B cell (primary cell): ENCODE measurements at regions of chr4 and their contacts with region 1.

Region 1: GRCh38 chr4:2241410-2242353 is at the starts of genes HAUS3 and POLN:
- DNase-seq: peak; percentile 100
- ATAC-seq: peak; percentile 97
- H3K4me3 ChIP-seq: peak within 1 kb of the TSS; percentile 66 to 88 (median 76)
- H3K4me3 Mint-ChIP-seq: peak within 1 kb of the TSS; percentile 95
- H3K27ac ChIP-seq: peak within 1 kb of the TSS; percentile 53 to 89
- H3K27ac Mint-ChIP-seq: peak within 1 kb of the TSS; percentile 95
- H3K4me1 ChIP-seq: peaks cover 34 to 45% of the 10 kb centered on the region in 2 donors
- H3K4me1 Mint-ChIP-seq: peaks cover 59% of the 10 kb centered on the region
- H3K27me3 ChIP-seq: no peaks in the 10 kb centered on the region
- H3K27me3 Mint-ChIP-seq: no peaks in the 10 kb centered on the region
- CTCF ChIP-seq: peak; percentile 23
- total RNA-seq, gene HAUS3: 24.2 and 26.5 TPM in 2 replicates
- total RNA-seq, gene POLN: 1.5 and 4.2 TPM in 2 replicates

Region 2: DNA sequence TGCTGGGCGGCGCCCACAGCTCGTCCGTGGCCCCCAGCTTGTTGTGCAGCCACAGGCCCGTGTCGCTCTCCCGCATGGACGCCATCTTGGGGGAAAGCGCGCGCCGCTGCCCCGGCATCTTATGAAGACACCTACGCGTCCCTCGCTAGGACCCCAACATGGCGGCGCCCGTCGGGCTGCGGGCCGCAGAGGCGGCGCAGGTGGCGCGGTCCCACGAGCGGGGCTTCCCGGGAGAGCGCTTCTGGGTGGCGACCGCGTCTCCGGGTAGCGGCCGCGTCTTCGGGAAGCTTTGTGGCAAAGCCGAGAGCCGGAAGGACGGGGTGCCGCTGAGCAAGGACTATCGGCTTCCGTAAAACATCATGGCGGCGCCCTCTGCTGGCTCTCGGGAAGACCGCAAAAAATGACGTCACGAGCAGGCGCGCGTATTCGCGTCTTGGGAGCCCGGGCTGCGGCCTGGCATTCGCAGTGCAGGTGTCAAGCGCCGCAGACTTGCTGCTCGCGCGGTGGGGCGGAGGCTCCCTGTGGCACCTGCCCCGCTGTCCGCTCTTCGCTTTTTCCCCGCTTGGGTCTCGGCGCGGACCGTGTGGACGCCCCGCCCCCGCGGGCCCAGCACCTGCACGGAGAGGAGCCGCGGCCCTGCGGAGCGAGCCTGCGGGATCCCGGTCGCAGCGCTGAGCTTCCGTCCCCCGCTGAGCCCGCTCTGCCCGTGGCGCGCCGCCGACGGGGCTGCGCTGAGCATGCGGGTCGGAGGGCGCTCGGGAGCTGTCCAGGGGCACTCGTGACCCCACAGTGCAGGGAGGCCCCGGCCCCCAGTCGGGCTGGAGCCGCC is 232.6 kb before region 1 on chr4 and contains the start of gene NELFA:
- CTCF ChIA-PET with region 1: no interaction called
- POLR2A ChIA-PET with region 1: no interaction called
- intact Hi-C with region 1: loop called (anchors 10 kb)
- DNase-seq: peak; percentile 99
- ATAC-seq: peak; percentile 82
- H3K4me3 ChIP-seq: peak within 1 kb of the TSS; percentile 61 to 93 (median 85)
- H3K4me3 Mint-ChIP-seq: peak within 1 kb of the TSS; percentile 95
- H3K27ac ChIP-seq: peak within 1 kb of the TSS; percentile 97 to 99
- H3K27ac Mint-ChIP-seq: peak within 1 kb of the TSS; percentile 92
- H3K4me1 ChIP-seq: peaks cover 10 to 21% of the 10 kb centered on the region in 2 donors
- H3K4me1 Mint-ChIP-seq: peaks cover 32% of the 10 kb centered on the region
- H3K27me3 ChIP-seq: no peaks in the 10 kb centered on the region
- H3K27me3 Mint-ChIP-seq: peaks cover 1% of the 10 kb centered on the region
- CTCF ChIP-seq: no peak
- total RNA-seq, gene NELFA: 60.7 and 63.5 TPM in 2 replicates

Region 3: GRCh38 chr4:2262143-2262943 is 20.7 kb after region 1 on chr4:
- CTCF ChIA-PET with region 1: interaction called, 7 read pairs
- POLR2A ChIA-PET with region 1: interaction called, 20 read pairs
- intact Hi-C with region 1: loop called (anchors 1 kb)
- DNase-seq: peak; percentile 99
- ATAC-seq: peak; percentile 87
- H3K4me3 ChIP-seq: peak overlapping the region in 4 of 5 experiments; percentile 63 to 80 (median 73)
- H3K4me3 Mint-ChIP-seq: peak overlapping the region; percentile 76
- H3K27ac ChIP-seq: peak overlapping the region; percentile 94 to 98
- H3K27ac Mint-ChIP-seq: peak overlapping the region; percentile 92
- H3K4me1 ChIP-seq: peaks cover 23 to 47% of the 10 kb centered on the region in 2 donors
- H3K4me1 Mint-ChIP-seq: peaks cover 20% of the 10 kb centered on the region
- H3K27me3 ChIP-seq: no peaks in the 10 kb centered on the region
- H3K27me3 Mint-ChIP-seq: no peaks in the 10 kb centered on the region
- CTCF ChIP-seq: no peak

Region 4: DNA sequence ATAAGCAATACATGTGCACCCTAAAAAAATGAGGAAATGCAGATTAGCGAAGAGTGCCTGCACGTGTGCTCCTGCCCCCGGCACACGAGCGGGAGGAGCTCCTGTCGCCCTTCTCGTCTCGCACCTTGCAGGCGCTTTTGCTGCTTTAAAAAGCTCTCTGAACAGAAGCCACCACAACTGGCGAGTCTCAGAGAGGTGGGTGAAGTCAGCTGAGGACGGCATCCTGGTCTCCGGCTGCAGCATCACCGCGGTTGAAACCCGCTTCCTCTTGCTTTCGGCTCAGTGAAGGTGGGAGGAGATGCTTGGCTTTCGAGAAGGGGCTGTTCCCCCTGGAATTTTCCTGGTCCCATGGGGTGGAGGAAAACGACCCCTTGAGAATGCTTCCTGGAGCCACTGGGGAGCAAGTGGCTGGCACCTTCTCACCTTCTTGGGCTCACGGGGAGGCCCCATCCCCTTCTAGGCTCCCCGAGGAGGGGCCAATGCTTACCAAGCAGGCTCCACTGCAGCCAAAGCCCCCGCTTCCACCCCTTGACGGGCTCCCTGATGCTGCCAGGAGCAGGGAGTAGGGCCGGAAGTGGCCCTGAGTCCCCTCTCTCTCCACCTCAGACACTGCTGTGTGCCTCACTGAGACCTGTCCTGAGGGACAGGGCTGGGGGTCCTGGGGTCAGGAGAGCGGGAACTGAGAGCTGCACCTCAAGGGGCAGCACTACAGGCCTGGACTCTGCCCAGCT is 49.5 kb after region 1 on chr4:
- CTCF ChIA-PET with region 1: no interaction called
- POLR2A ChIA-PET with region 1: interaction called, 5 read pairs
- intact Hi-C with region 1: loop called (anchors 2 kb)
- DNase-seq: peak; percentile 75
- ATAC-seq: peak; percentile 75
- H3K4me3 ChIP-seq: peak overlapping the region in 3 of 5 experiments; percentile 33 to 34 (median 34)
- H3K4me3 Mint-ChIP-seq: peak overlapping the region; percentile 77
- H3K27ac ChIP-seq: peak overlapping the region in 1 of 2 donors; percentile 49
- H3K27ac Mint-ChIP-seq: peak overlapping the region; percentile 81
- H3K4me1 ChIP-seq: peaks cover 18 to 20% of the 10 kb centered on the region in 2 donors
- H3K4me1 Mint-ChIP-seq: peaks cover 22% of the 10 kb centered on the region
- H3K27me3 ChIP-seq: peaks cover 0 to 8% (median 3%) of the 10 kb centered on the region in 4 experiments
- H3K27me3 Mint-ChIP-seq: no peaks in the 10 kb centered on the region
- CTCF ChIP-seq: no peak

Region 5: DNA sequence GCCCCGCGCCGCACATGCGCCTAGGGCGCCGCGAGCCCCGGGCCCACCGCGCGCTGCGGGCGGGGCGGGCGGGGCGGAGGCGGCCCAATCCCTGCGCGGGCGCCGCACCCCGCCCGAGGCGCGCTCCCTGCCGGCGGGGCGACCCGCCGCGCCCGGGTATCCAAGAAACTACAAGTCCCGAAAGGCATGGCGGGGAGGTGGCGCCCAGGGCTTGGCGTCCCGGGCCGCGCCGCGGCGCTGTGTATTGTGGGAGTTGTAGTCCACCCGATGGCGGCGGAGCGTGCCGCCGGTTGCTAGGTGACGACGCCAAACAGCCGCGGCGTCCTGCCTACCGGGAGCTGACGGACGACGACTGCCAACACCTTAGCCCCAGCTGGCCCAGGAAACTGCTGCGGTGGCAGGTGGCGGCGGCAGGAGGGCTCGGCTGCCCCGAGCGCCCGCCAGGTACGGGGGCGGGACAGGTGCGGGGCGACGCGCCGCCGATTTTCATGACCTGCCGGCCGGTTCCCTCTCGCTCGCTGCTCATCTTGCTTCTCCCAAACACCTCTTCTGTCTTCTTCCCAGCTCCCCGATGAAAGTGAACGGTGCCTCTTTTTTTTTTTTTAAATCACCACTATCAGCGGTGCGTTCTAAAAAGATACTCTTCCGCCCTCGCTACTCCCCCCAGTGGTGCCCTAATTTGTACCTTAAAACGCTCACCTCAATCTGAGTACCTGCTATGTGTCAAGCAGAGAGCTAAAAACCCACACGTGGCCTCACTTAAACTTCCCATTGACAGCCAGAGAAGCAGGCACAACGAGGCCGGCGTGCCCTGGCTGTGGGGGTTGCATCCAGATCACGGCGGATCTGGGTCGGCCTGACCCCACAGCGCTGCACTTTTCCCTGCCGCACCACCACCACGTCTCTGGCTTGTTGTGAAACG is 177.2 kb after region 1 on chr4 and contains the start of gene CFAP99:
- CTCF ChIA-PET with region 1: interaction called, 6 read pairs
- POLR2A ChIA-PET with region 1: interaction called, 5 read pairs
- intact Hi-C with region 1: loop called (anchors 1 kb)
- DNase-seq: peak; percentile 99
- ATAC-seq: peak; percentile 92
- H3K4me3 ChIP-seq: peak within 1 kb of the TSS; percentile 2 to 72 (median 51)
- H3K4me3 Mint-ChIP-seq: peak within 1 kb of the TSS; percentile 89
- H3K27ac ChIP-seq: peak within 1 kb of the TSS; percentile 29 to 76
- H3K27ac Mint-ChIP-seq: peak within 1 kb of the TSS; percentile 89
- H3K4me1 ChIP-seq: peaks cover 34 to 38% of the 10 kb centered on the region in 2 donors
- H3K4me1 Mint-ChIP-seq: peaks cover 44% of the 10 kb centered on the region
- H3K27me3 ChIP-seq: peaks cover 0 to 64% (median 33%) of the 10 kb centered on the region in 4 experiments
- H3K27me3 Mint-ChIP-seq: peaks cover 40% of the 10 kb centered on the region
- CTCF ChIP-seq: peak; percentile 41
- total RNA-seq, gene CFAP99: not detected in 2 replicates

Region 6: GRCh38 chr4:2462218-2462991 is 220.7 kb after region 1 on chr4:
- CTCF ChIA-PET with region 1: interaction called, 11 read pairs
- POLR2A ChIA-PET with region 1: no interaction called
- intact Hi-C with region 1: no loop called
- DNase-seq: peak; percentile 83
- ATAC-seq: peak; percentile 97
- H3K4me3 ChIP-seq: peak overlapping the region in 3 of 5 experiments; percentile 38 to 47 (median 46)
- H3K4me3 Mint-ChIP-seq: peak overlapping the region; percentile 82
- H3K27ac ChIP-seq: no peak overlapping the region
- H3K27ac Mint-ChIP-seq: no peak overlapping the region
- H3K4me1 ChIP-seq: peaks cover 5 to 10% of the 10 kb centered on the region in 2 donors
- H3K4me1 Mint-ChIP-seq: peaks cover 9% of the 10 kb centered on the region
- H3K27me3 ChIP-seq: peaks cover 0 to 9% (median 4%) of the 10 kb centered on the region in 4 experiments
- H3K27me3 Mint-ChIP-seq: peaks cover 3% of the 10 kb centered on the region
- CTCF ChIP-seq: peak; percentile 71